ENCODE measurements at regions of chr20 and their contacts with region 1.

Region 1: DNA sequence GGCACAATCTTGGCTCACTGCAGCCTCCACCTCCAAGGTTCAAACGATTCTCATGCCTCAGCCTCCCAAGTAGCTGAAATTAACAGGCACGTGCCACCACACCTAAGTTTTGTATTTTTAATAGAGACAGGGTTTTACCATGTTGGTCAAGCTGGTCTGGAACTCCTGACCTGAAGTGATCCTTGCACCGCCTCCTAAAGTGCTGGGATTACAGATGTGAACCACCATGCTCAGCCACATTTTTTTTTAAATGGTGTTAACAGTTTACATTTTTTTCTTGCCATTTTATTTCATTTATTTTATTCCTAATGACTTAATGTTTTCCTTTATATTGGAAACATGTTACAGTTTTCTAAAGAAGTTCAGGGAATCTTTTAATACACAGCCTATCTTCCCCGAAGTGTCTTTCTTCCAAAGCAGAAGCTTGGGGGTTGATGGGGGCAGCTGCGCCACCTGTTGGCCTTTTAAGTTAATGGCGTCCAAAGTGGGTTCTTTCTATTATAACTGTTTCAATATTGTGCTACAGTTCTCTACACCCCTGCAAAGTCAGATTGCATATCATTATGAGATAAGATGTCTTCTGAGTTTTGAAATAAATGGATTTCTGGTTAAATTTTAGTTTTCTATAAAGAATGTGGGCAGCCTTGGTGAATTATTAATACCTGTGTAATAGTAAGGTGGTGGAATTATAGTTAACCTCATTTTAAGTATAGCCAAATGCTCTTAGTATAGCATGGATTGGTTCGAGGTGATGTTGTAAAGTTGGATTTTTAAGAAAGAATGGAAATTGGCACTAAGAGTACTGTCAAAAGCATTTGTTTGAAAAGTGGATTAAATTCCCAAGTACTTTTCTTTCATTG is 42.0 kb upstream of the PLCG1 start:
- DNase-seq: peak; percentile 71
- H3K4me3 Mint-ChIP-seq: no peak overlapping the region
- H3K27ac Mint-ChIP-seq: peak overlapping the region; percentile 90
- H3K4me1 Mint-ChIP-seq: peaks cover 22% of the 10 kb centered on the region
- H3K27me3 Mint-ChIP-seq: no peaks in the 10 kb centered on the region

Region 2: DNA sequence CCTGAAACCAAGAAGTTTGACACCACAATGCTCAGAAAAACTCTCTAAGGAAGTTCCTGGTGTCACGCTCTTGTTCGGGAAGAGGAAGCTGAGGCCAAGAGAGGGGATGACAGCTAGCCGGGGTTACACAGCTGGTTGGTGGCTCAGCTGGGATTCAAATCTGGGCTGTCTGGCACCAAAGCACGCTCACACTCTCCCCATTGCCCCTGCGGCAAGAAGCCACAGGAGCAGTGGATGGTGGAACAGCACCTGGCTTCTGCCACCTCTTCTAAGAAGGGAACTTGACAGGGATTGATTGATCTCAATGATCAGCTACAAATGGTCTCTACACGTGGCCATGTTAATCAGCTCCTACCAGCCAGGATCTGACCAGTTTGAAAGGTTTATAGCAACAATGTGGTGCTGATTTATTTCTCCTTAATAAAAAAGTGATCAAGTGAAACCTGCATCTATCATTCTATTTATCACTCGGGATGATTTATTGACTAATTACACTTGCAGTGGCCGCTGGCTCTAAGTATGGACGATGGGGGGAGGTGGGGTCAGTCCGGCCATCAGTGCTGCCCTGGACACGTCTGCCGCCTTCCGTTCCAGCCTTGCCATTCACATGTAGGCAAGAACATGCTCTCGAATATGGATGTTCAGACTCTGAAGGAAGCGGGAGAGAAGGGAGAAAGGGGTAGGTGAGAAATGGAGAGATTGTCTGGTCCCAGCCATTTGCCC is 138.6 kb before region 1 on chr20:
- CTCF ChIA-PET with region 1: no interaction called
- POLR2A ChIA-PET with region 1: no interaction called
- intact Hi-C with region 1: no loop called
- DNase-seq: no peak
- H3K4me3 Mint-ChIP-seq: no peak overlapping the region
- H3K27ac Mint-ChIP-seq: no peak overlapping the region
- H3K4me1 Mint-ChIP-seq: peaks cover 3% of the 10 kb centered on the region
- H3K27me3 Mint-ChIP-seq: peaks cover 6% of the 10 kb centered on the region

Region 3: GRCh38 chr20:41003143-41003883 is 92.0 kb before region 1 on chr20:
- CTCF ChIA-PET with region 1: interaction called, 9 read pairs
- POLR2A ChIA-PET with region 1: no interaction called
- intact Hi-C with region 1: loop called (anchors 1 kb)
- DNase-seq: peak; percentile 89
- H3K4me3 Mint-ChIP-seq: peak overlapping the region; percentile 67
- H3K27ac Mint-ChIP-seq: peak overlapping the region; percentile 99
- H3K4me1 Mint-ChIP-seq: peaks cover 46% of the 10 kb centered on the region
- H3K27me3 Mint-ChIP-seq: no peaks in the 10 kb centered on the region

Region 4: DNA sequence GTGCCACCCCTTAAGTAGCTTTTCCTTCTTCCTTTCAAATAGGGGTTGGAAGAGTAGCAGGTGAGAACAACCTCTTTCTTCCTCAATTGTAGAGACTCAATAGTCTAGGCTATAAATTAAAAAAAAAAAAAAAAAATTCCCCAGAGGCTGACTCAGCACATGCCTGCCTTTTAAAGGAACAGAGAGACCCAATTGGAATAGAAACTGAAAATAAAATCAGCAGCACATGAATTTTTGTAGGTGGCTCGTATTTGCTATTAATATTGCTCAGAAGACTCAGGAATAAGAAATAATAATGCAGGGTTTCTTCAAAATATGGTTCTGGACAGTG is 47.4 kb before region 1 on chr20:
- CTCF ChIA-PET with region 1: interaction called, 12 read pairs
- POLR2A ChIA-PET with region 1: no interaction called
- intact Hi-C with region 1: no loop called
- DNase-seq: no peak
- H3K4me3 Mint-ChIP-seq: peak overlapping the region; percentile 76
- H3K27ac Mint-ChIP-seq: peak overlapping the region; percentile 87
- H3K4me1 Mint-ChIP-seq: peaks cover 93% of the 10 kb centered on the region
- H3K27me3 Mint-ChIP-seq: no peaks in the 10 kb centered on the region

Region 5: GRCh38 chr20:41078329-41078728 is 17.0 kb before region 1 on chr20:
- CTCF ChIA-PET with region 1: interaction called, 22 read pairs
- POLR2A ChIA-PET with region 1: interaction called, 3 read pairs
- intact Hi-C with region 1: loop called (anchors 2 kb)
- DNase-seq: no peak
- H3K4me3 Mint-ChIP-seq: no peak overlapping the region
- H3K27ac Mint-ChIP-seq: peak overlapping the region; percentile 50
- H3K4me1 Mint-ChIP-seq: peaks cover 54% of the 10 kb centered on the region
- H3K27me3 Mint-ChIP-seq: no peaks in the 10 kb centered on the region

Region 6: GRCh38 chr20:41149679-41150131 is 54.4 kb after region 1 on chr20:
- CTCF ChIA-PET with region 1: no interaction called
- POLR2A ChIA-PET with region 1: no interaction called
- intact Hi-C with region 1: no loop called
- DNase-seq: peak; percentile 53
- H3K4me3 Mint-ChIP-seq: no peak overlapping the region
- H3K27ac Mint-ChIP-seq: peak overlapping the region; percentile 57
- H3K4me1 Mint-ChIP-seq: peaks cover 94% of the 10 kb centered on the region
- H3K27me3 Mint-ChIP-seq: no peaks in the 10 kb centered on the region